Activated naive CD4-positive, alpha-beta T cell treated with anti-CD3 and anti-CD28 coated beads for 36 hours (primary cell): ENCODE measurements at regions of chr11 and their contacts with region 1.

Region 1: DNA sequence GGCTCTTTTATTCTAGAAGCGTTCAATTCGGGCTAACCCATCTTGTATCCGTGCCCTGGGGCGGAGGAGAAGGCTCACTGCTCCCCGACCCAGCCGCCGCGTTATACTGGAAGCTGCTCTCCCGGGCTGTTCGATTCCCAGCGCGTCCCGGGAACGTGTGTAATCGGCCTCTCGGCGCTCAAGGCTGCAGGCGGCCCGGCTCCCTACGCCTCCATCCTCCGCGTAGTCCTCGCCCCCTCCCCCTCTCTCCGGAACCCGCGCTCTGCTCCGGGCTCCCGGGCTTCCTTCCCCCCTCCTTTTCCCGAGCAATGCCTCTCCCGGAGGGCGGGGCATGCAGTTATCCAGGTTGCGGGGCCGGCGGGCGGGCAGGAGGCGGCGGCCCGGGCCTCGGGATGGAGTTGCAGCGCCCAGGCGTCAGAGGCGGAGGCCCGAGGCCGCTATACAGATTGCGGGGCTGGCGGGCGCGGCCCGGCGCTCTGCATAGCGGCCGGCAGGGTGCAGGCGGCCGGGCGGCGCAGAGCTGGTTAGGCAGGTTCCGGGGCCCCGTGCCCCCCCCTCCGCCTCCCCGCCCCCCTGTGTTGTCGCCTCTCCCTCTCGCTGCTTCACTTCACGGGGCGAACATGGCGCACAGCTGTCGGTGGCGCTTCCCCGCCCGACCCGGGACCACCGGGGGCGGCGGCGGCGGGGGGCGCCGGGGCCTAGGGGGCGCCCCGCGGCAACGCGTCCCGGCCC is at the start of gene KMT2A:
- DNase-seq: peak; percentile 95
- H3K4me3 Mint-ChIP-seq: peak within 1 kb of the TSS; percentile 90
- H3K27ac Mint-ChIP-seq: peak within 1 kb of the TSS; percentile 98
- H3K4me1 Mint-ChIP-seq: peaks cover 28% of the 10 kb centered on the region
- H3K27me3 Mint-ChIP-seq: no peaks in the 10 kb centered on the region
- total RNA-seq, gene KMT2A: 68.4 to 68.5 TPM

Region 2: GRCh38 chr11:117817368-117818040 is 618.6 kb before region 1 on chr11:
- CTCF ChIA-PET with region 1: no interaction called
- intact Hi-C with region 1: loop called (anchors 2 kb)
- DNase-seq: peak; percentile 98
- H3K4me3 Mint-ChIP-seq: peak overlapping the region; percentile 56
- H3K27ac Mint-ChIP-seq: peak overlapping the region; percentile 95
- H3K4me1 Mint-ChIP-seq: peaks cover 65% of the 10 kb centered on the region
- H3K27me3 Mint-ChIP-seq: no peaks in the 10 kb centered on the region

Region 3: GRCh38 chr11:118304568-118305248 is 131.4 kb before region 1 on chr11 and contains the start of gene CD3E:
- CTCF ChIA-PET with region 1: interaction called, 3 read pairs
- intact Hi-C with region 1: loop called (anchors 2 kb)
- DNase-seq: peak; percentile 88
- H3K4me3 Mint-ChIP-seq: peak within 1 kb of the TSS; percentile 98
- H3K27ac Mint-ChIP-seq: peak within 1 kb of the TSS; percentile 100
- H3K4me1 Mint-ChIP-seq: peaks cover 68% of the 10 kb centered on the region
- H3K27me3 Mint-ChIP-seq: no peaks in the 10 kb centered on the region
- total RNA-seq, gene CD3E: 377 to 415 TPM

Region 4: GRCh38 chr11:118321386-118322121 is 114.5 kb before region 1 on chr11:
- CTCF ChIA-PET with region 1: no interaction called
- intact Hi-C with region 1: no loop called
- DNase-seq: no peak
- H3K4me3 Mint-ChIP-seq: no peak overlapping the region
- H3K27ac Mint-ChIP-seq: no peak overlapping the region
- H3K4me1 Mint-ChIP-seq: peaks cover 54% of the 10 kb centered on the region
- H3K27me3 Mint-ChIP-seq: no peaks in the 10 kb centered on the region

Region 5: GRCh38 chr11:118401151-118401878 is 34.7 kb before region 1 on chr11 and contains the start of gene ATP5MG:
- CTCF ChIA-PET with region 1: interaction called, 4 read pairs
- intact Hi-C with region 1: loop called (anchors 1 kb)
- DNase-seq: peak; percentile 97
- H3K4me3 Mint-ChIP-seq: peak within 1 kb of the TSS; percentile 95
- H3K27ac Mint-ChIP-seq: peak within 1 kb of the TSS; percentile 98
- H3K4me1 Mint-ChIP-seq: peaks cover 58% of the 10 kb centered on the region
- H3K27me3 Mint-ChIP-seq: no peaks in the 10 kb centered on the region
- total RNA-seq, gene ATP5MG: 279 to 284 TPM

Region 6: DNA sequence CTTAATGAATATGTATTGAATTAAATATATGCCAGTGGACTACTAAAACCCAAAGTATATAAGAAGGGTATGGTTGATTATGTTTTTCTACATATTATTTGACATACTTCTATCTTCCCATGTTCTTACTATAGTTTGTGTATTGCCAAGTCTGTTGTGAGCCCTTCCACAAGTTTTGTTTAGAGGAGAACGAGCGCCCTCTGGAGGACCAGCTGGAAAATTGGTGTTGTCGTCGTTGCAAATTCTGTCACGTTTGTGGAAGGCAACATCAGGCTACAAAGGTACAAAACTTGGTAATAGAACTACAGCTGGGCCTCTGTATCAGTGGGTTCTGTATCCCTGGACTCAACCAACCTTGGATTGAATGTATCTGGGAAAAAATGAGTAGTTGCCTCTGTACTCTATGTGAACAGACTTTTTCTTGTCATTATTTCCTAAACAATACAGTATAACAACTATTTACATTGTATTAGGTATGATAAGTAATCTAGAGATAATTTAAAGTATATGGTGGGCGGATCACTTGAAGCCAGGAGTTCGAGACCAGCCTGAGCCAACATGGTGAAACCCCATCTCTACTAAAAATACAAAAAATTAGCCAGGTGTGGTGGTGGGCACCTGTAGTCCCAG is 52.5 kb after region 1 on chr11:
- CTCF ChIA-PET with region 1: interaction called, 9 read pairs
- intact Hi-C with region 1: loop called (anchors 1 kb)
- DNase-seq: peak; percentile 92
- H3K4me3 Mint-ChIP-seq: no peak overlapping the region
- H3K27ac Mint-ChIP-seq: no peak overlapping the region
- H3K4me1 Mint-ChIP-seq: peaks cover 9% of the 10 kb centered on the region
- H3K27me3 Mint-ChIP-seq: no peaks in the 10 kb centered on the region

Region 7: DNA sequence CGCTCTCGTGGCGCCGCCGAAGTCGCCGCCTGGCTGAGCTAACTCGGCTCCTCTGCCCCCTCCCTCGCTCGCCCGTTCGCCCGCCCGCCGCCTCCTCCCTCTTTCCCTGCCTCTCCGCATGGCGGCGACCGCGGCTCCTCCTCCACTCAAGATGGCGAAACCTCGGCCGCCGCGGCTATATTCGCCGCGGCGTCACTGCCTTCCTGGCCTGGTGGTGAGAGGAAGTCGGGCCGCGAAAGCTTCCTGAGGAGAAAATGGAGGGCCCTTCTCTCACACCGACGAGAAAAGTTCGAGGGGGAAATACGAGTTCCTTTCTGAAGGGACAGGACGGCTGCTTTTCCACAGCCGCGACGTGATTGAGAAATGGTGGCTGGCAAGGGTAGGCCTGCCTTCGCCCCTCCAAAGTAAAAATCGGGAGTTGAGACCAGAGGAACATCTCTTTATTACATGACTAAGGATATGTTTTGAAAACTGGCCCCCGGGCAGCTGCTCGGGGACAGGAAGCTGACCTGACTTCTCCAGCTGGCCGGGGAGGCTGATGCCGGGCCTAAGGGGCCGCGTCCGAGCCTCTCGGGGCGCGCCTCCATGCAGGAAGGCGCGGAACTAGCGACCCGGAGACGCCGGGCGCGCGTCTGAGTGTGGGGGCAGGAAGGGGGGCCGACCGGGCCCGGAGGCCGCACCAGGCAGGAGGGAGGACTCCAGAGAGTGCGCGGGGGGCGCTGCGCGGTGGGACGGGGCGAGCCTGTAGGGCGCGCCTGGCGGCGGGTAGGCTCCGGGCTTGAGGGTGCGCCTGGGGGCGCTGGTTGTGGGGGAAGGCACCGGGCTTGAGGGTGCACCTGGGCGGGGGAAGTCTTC is 355.3 kb after region 1 on chr11 and contains the start of gene DDX6:
- CTCF ChIA-PET with region 1: no interaction called
- intact Hi-C with region 1: loop called (anchors 2 kb)
- DNase-seq: peak; percentile 95
- H3K4me3 Mint-ChIP-seq: peak within 1 kb of the TSS; percentile 99
- H3K27ac Mint-ChIP-seq: peak within 1 kb of the TSS; percentile 98
- H3K4me1 Mint-ChIP-seq: peaks cover 20% of the 10 kb centered on the region
- H3K27me3 Mint-ChIP-seq: no peaks in the 10 kb centered on the region
- total RNA-seq, gene DDX6: 274 to 279 TPM